PC-9 (cell line): ENCODE measurements at regions of chr19 and their contacts with region 1.

Region 1: GRCh38 chr19:33406521-33407139 is 33.1 kb downstream of the CEBPG start:
- DNase-seq: peak in 1 of 2 experiments; percentile 72
- H3K4me3 ChIP-seq: no peak overlapping the region
- H3K27ac ChIP-seq: no peak overlapping the region
- H3K4me1 ChIP-seq: no peaks in the 10 kb centered on the region
- H3K27me3 ChIP-seq: no peaks in the 10 kb centered on the region
- CTCF ChIP-seq: peak; percentile 93

Region 2: GRCh38 chr19:33125929-33126388 is 280.7 kb before region 1 on chr19:
- CTCF ChIA-PET with region 1: no interaction called
- POLR2A ChIA-PET with region 1: no interaction called
- intact Hi-C with region 1: loop called (anchors 5 kb)
- DNase-seq: peak; percentile 45 to 48
- H3K4me3 ChIP-seq: no peak overlapping the region
- H3K27ac ChIP-seq: no peak overlapping the region
- H3K4me1 ChIP-seq: no peaks in the 10 kb centered on the region
- H3K27me3 ChIP-seq: no peaks in the 10 kb centered on the region
- CTCF ChIP-seq: peak; percentile 86

Region 3: DNA sequence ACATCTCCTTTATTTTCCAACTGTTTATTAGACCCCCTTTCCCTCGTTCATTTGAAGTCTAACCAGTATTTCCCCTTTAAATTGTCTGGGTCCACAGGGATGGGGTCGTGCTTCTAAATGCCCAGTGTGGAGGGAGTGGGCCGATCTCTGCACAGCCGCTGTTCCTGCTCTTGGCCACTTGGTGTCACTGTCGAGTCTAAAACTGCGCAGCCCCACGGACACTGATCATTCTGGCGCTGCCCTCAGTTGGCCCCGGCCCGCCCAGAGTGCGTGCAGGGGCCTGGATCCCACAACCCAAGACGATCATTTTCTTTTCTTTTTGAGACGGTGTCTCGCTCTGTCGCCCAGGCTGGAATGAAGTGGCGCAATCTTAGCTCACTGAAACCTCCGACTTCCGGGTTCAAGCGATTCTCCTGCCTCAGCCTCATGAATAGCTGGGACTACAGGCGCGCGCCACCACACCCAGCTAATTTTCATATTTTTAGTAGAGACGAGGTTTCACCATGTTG is 262.7 kb before region 1 on chr19:
- CTCF ChIA-PET with region 1: no interaction called
- POLR2A ChIA-PET with region 1: no interaction called
- intact Hi-C with region 1: loop called (anchors 5 kb)
- DNase-seq: peak in 1 of 2 experiments; percentile 48
- H3K4me3 ChIP-seq: no peak overlapping the region
- H3K27ac ChIP-seq: no peak overlapping the region
- H3K4me1 ChIP-seq: no peaks in the 10 kb centered on the region
- H3K27me3 ChIP-seq: no peaks in the 10 kb centered on the region
- CTCF ChIP-seq: peak; percentile 94

Region 4: GRCh38 chr19:33235269-33235995 is 171.2 kb before region 1 on chr19:
- CTCF ChIA-PET with region 1: interaction called, 4 read pairs
- POLR2A ChIA-PET with region 1: no interaction called
- intact Hi-C with region 1: loop called (anchors 1 kb)
- DNase-seq: peak; percentile 61 to 79
- H3K4me3 ChIP-seq: no peak overlapping the region
- H3K27ac ChIP-seq: no peak overlapping the region
- H3K4me1 ChIP-seq: no peaks in the 10 kb centered on the region
- H3K27me3 ChIP-seq: peaks cover 21% of the 10 kb centered on the region
- CTCF ChIP-seq: peak; percentile 94

Region 5: GRCh38 chr19:33241530-33242101 is 165.0 kb before region 1 on chr19:
- CTCF ChIA-PET with region 1: interaction called, 4 read pairs
- POLR2A ChIA-PET with region 1: no interaction called
- intact Hi-C with region 1: loop called (anchors 1 kb)
- DNase-seq: no peak
- H3K4me3 ChIP-seq: no peak overlapping the region
- H3K27ac ChIP-seq: no peak overlapping the region
- H3K4me1 ChIP-seq: no peaks in the 10 kb centered on the region
- H3K27me3 ChIP-seq: no peaks in the 10 kb centered on the region
- CTCF ChIP-seq: peak; percentile 72

Region 6: GRCh38 chr19:33311326-33311682 is 95.3 kb before region 1 on chr19:
- CTCF ChIA-PET with region 1: no interaction called
- POLR2A ChIA-PET with region 1: no interaction called
- intact Hi-C with region 1: loop called (anchors 2 kb)
- DNase-seq: peak in 1 of 2 experiments; percentile 43
- H3K4me3 ChIP-seq: no peak overlapping the region
- H3K27ac ChIP-seq: no peak overlapping the region
- H3K4me1 ChIP-seq: no peaks in the 10 kb centered on the region
- H3K27me3 ChIP-seq: no peaks in the 10 kb centered on the region
- CTCF ChIP-seq: peak; percentile 61

Region 7: DNA sequence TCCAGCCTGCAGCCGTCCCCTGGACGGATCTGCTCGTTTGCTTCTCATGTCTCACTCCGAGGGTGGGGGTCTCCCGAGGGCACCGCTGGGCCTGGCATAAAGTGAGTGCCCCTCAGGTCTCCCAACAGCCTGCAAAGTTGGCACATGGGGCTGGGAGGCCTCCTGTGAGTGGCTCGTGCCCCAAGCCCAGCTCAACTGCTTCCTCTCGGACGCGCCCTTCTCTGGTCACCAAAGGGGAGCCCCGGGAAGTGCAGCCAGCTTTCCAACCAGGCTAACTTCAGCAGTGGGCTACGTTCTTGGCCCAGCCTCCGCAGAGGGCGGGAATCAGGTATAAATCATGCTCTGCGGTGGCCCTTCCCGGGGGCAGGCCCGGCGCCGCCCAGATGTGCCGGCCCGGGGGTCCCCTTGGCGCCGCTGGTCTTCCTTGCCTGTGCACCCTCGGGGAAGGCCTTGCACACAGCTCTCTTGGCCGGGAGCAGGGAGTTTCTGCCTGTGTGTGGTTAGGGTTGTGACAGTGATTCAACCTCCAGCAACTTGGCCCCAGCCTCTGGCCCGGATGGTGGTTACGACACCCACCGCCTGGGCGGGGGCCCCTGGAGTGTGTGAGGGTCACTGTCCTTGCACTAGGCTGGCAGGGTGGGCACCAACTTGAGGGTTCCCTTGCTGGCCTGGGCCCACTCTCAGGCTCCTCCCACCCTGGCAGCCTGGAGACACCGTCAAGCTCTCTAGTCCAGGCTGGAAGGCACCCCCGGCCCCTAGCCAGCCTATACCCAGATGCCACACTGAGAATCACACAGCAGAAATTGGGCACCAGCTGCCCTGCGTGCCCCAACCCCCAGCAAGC is 12.4 kb before region 1 on chr19:
- CTCF ChIA-PET with region 1: no interaction called
- POLR2A ChIA-PET with region 1: no interaction called
- intact Hi-C with region 1: no loop called
- DNase-seq: no peak
- H3K4me3 ChIP-seq: no peak overlapping the region
- H3K27ac ChIP-seq: no peak overlapping the region
- H3K4me1 ChIP-seq: peaks cover 6% of the 10 kb centered on the region
- H3K27me3 ChIP-seq: no peaks in the 10 kb centered on the region
- CTCF ChIP-seq: no peak